BJ (cell line): ENCODE measurements at regions of chr6 and their contacts with region 1.

Region 1: DNA sequence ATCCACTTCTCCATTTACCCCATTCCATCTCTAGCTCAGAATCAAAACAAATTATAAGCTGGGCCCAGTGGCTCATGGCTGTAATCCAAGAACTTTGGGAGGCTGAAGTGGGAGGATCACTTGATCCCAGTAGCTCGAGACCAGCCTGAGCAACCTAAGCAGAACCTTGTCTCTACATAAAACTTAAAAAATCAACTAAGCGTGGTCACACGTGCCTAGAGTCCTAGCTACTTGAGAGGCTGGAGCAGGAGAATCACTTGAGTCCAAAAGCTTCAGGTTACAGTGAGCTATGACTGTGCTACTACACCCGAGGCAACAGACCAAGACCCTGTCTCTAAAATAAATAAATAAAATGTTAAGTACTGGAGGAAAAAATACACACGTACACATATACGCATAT is 74.7 kb upstream of the RUNX2 start:
- DNase-seq: no peak
- H3K4me3 ChIP-seq: no peak overlapping the region
- H3K27me3 ChIP-seq: no peaks in the 10 kb centered on the region
- CTCF ChIP-seq: no peak

Region 2: DNA sequence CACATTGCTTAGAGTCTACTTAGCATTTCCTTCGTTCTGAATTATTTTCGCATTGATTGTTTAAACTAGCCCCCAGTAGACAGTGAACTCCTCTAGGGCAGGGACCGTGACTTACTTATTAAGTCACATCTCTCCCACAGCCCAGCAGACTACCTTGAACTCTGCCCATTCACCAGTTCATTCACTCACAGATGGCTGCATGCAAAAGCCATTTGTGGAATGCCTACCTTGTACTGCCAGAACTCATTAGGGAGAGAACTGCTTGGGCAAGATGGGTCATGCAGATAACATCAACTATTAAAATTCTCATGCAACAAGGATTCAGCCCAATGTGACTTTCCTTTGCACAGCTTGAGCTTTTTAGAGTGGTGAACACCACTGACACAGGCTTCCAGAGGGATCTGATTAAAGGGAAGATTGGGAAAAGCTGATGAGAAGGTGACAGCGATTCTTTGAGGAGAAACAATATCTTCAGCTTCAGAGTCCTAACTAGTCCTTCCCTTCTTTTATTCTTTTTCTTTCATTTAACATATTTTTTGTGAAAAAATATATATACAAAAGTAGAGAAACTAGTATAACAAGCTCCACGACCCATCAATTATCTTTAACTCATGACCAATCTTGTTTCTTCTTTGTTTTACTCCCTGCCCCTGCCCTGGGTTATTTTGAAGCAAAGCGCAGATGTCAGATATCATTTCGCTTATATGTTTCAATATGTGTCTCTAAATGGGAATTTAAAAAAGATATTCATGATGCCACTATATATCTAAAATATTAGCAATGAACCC is 592.0 kb before region 1 on chr6:
- CTCF ChIA-PET with region 1: no interaction called
- POLR2A ChIA-PET with region 1: interaction called, 12 read pairs
- DNase-seq: peak; percentile 89
- H3K4me3 ChIP-seq: no peak overlapping the region
- H3K27me3 ChIP-seq: no peaks in the 10 kb centered on the region
- CTCF ChIP-seq: no peak

Region 3: DNA sequence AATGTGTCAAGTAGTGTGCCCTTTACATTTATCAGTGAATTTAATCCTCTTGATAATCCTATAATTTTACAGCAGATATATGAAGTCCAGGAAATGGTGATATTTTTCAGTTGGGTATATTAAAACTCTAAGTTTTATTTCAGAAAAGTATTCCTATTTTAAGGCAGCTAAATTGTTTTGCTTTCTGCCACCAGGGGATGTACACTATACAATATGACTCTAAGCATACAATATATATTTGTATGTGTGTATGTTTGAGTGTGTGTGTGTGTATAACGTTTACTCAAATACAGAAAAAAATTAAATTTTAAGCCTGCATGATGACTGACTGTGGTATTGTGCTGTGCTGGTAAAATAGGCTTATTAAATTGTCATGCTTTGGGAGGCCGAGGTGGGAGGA is 27.4 kb before region 1 on chr6:
- CTCF ChIA-PET with region 1: no interaction called
- POLR2A ChIA-PET with region 1: no interaction called
- DNase-seq: no peak
- H3K4me3 ChIP-seq: no peak overlapping the region
- H3K27me3 ChIP-seq: no peaks in the 10 kb centered on the region
- CTCF ChIP-seq: no peak

Region 4: DNA sequence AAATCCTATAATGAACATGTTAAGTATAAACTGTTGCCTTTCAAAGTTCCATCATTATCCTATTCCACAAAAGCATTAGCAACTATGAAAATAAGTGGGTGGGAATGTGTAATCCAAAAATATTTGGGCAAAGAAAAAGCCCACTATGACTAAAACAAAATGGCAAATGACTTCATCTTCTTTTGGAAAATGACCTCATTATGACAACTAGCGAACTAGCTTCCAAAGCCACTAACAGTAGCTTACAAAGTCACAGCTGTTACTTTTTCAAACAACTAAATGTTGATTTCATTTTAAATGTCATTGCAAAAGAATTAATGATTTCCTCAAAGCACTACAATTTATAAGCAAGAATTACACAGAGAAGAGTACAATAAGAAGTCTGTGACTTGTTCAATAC is 24.9 kb after region 1 on chr6:
- CTCF ChIA-PET with region 1: no interaction called
- POLR2A ChIA-PET with region 1: no interaction called
- DNase-seq: no peak
- H3K4me3 ChIP-seq: no peak overlapping the region
- H3K27me3 ChIP-seq: no peaks in the 10 kb centered on the region
- CTCF ChIP-seq: no peak